ENCODE measurements at regions of chr14 and their contacts with region 1.

Region 1: GRCh38 chr14:96409701-96410100 is 17.8 kb downstream of the AK7 start:
- DNase-seq: no peak
- ATAC-seq: no peak
- H3K4me3 ChIP-seq: no peak overlapping the region
- H3K27ac ChIP-seq: no peak overlapping the region
- H3K4me1 ChIP-seq: no peaks in the 10 kb centered on the region
- H3K27me3 ChIP-seq: no peaks in the 10 kb centered on the region
- CTCF ChIP-seq: no peak

Region 2: GRCh38 chr14:96304956-96305355 is 104.7 kb before region 1 on chr14:
- intact Hi-C with region 1: loop called in 1 of 2 experiments (anchors 10 kb)
- DNase-seq: no peak
- ATAC-seq: no peak
- H3K4me3 ChIP-seq: no peak overlapping the region
- H3K27ac ChIP-seq: no peak overlapping the region
- H3K4me1 ChIP-seq: no peaks in the 10 kb centered on the region
- H3K27me3 ChIP-seq: no peaks in the 10 kb centered on the region
- CTCF ChIP-seq: no peak

Region 3: DNA sequence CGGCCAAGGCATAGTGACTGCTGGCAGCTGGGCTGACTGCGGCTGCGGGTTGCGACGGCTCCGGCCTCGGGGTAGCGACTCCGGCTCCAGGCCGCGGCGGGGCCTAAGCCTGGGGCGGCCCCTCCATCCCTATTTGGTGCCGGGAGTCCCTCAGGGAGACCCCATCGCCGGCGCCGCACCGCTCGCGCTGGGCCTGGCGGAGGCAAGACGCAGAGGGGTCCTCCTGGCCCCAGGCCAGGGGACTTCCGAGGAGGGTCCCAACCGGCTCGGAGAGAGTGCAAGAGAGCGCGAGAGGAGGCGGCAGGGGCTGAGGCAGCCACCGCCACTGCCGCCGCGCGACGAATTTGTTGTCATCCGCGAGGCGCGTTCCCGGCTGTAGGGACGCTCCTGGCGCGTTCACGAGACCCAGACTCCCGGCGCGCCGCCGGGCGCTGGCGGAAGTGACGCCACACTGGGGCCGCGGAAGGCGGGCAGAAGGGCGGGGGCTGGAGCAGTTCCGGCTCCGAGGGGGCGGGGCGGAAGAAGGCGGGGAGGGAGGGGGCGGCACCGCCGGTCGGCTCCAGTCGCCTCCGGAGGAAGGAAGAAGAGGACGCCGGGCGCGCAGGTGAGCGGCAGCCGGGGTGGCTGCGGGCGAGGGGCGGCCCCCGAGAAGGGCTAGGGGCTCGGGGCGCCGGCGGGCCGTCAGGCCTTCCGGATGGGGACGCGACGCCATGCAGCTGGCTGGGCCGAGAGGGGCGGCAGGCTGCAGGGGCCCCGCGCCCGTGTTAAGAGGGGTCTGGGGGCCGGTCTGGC is 46.5 kb before region 1 on chr14 and contains the starts of genes ATG2B and GSKIP:
- intact Hi-C with region 1: no loop called
- DNase-seq: peak; percentile 92 to 99 (median 96)
- ATAC-seq: peak; percentile 94
- H3K4me3 ChIP-seq: peak within 1 kb of the TSS; percentile 79 to 90
- H3K27ac ChIP-seq: peak within 1 kb of the TSS; percentile 92 to 93
- H3K4me1 ChIP-seq: peaks cover 14 to 55% of the 10 kb centered on the region in 2 donors
- H3K27me3 ChIP-seq: no peaks in the 10 kb centered on the region
- CTCF ChIP-seq: no peak
- polyA plus RNA-seq, gene ATG2B: 31.0 to 44.1 (median 34.7) TPM
- polyA plus RNA-seq, gene GSKIP: 18.8 to 28.4 (median 22.3) TPM

Region 4: GRCh38 chr14:96525452-96525851 is 115.8 kb after region 1 on chr14:
- intact Hi-C with region 1: no loop called
- DNase-seq: no peak
- ATAC-seq: no peak
- H3K4me3 ChIP-seq: no peak overlapping the region
- H3K27ac ChIP-seq: no peak overlapping the region
- H3K4me1 ChIP-seq: no peaks in the 10 kb centered on the region
- H3K27me3 ChIP-seq: no peaks in the 10 kb centered on the region
- CTCF ChIP-seq: no peak

Measured in left lung (tissue), 14 donors.